A673 (cell line): ENCODE measurements at regions of chr10 and their contacts with region 1.

Region 1: DNA sequence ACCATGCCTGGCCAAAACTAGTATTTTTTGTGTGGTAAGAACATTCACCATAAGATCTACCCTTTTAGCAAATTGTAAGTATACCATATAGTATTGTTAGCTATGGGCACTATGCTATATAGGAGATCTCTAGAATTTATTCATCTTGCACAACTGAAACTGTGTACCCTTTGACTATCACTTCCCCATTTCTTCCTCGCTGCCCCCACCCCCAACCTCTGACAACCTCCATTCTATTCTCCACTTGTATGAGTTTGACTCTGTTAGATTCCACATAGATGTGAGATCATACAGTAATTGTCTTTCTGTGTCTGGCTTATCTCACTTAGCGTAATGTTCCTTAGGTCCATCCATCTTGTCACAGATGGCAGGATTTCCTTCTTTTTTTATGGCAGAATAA is 3.6 kb downstream of the CASP7 start:
- DNase-seq: no peak
- H3K4me3 ChIP-seq: no peak overlapping the region
- H3K27ac ChIP-seq: no peak overlapping the region
- H3K4me1 ChIP-seq: no peaks in the 10 kb centered on the region
- H3K27me3 ChIP-seq: no peaks in the 10 kb centered on the region
- CTCF ChIP-seq: no peak

Region 2: DNA sequence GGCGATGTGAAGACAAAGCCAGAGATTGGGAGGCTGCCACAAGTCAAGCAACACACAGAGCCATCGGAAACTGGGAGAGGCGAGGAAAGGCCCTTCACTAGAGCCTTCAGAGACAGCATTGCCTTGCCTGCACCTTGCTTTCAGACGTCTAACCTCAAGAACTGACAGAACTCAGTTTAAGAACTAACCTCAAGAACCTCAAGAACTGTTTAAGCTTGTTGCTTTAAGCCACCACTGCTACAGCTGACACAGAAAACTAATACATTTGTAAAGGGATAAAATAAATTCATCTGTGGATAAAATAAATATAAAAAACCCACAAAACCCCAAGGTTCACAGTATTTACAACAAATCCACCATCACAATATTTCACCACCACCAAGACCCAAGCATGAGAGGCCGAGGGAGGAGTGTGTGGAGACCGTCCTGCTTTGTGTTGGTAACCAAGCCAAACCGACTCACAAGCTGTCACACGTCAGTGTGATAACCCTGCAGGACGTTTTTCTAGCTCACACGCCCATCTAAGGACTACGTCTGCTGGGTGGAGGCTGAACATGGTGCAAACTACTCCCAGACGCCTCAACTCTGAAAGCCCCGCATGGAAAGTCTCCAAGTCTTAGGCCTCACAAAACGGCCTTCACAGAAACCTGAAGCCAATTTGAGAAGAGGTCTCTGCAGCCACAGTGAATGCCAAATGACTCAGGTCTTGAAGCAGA is 857.9 kb after region 1 on chr10:
- CTCF ChIA-PET with region 1: no interaction called
- POLR2A ChIA-PET with region 1: interaction called, 15 read pairs
- intact Hi-C with region 1: no loop called
- DNase-seq: no peak
- H3K4me3 ChIP-seq: no peak overlapping the region
- H3K27ac ChIP-seq: no peak overlapping the region
- H3K4me1 ChIP-seq: peaks cover 10% of the 10 kb centered on the region
- H3K27me3 ChIP-seq: no peaks in the 10 kb centered on the region
- CTCF ChIP-seq: no peak